Activated T-helper 1 cell treated with anti-CD3 and anti-CD28 coated beads, Interleukin-12 subunit alpha, Interleukin-12 subunit beta, Interleukin-2, Interleukin-4 antibody, amounts not matched to agents 30 ng/mL and 10 ng/mL and 1 ng/mL, durations not matched to agents 14 hours and 24 hours and 36 hours (primary cell): ENCODE measurements at regions of chr6 and their contacts with region 1.

Region 1: GRCh38 chr6:11064836-11065235 is 20.7 kb upstream of the ELOVL2 start:
- DNase-seq: no peak
- H3K4me3 Mint-ChIP-seq: no peak overlapping the region
- H3K27ac Mint-ChIP-seq: no peak overlapping the region
- H3K4me1 Mint-ChIP-seq: no peaks in the 10 kb centered on the region
- H3K27me3 Mint-ChIP-seq: peaks cover 12% of the 10 kb centered on the region

Region 2: GRCh38 chr6:10465629-10466504 is 599.0 kb before region 1 on chr6:
- intact Hi-C with region 1: no loop called
- DNase-seq: no peak
- H3K4me3 Mint-ChIP-seq: no peak overlapping the region
- H3K27ac Mint-ChIP-seq: no peak overlapping the region
- H3K4me1 Mint-ChIP-seq: no peaks in the 10 kb centered on the region
- H3K27me3 Mint-ChIP-seq: peaks cover 12% of the 10 kb centered on the region

Region 3: GRCh38 chr6:10478187-10479040 is 586.4 kb before region 1 on chr6:
- intact Hi-C with region 1: loop called (anchors 1 kb)
- DNase-seq: no peak
- H3K4me3 Mint-ChIP-seq: no peak overlapping the region
- H3K27ac Mint-ChIP-seq: no peak overlapping the region
- H3K4me1 Mint-ChIP-seq: no peaks in the 10 kb centered on the region
- H3K27me3 Mint-ChIP-seq: peaks cover 13% of the 10 kb centered on the region

Region 4: DNA sequence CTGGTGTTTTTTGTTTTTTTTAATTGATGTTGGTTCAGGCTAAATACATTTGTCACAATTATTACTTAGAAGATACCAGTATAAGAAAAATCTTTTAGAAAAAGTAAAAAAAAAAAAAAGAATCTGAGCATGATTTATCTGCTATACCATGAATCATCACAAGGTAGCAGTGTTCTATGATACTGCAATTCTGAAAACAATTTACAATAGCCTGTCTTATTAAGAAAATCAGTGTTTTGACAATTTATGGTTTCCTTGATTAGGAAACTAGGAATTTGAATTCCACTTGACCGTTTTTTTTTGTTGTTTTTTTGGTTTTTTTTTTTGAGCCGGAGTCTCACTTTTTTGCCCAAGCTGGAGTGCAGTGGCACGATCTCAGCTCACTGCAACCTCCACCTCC is 217.2 kb before region 1 on chr6:
- intact Hi-C with region 1: loop called (anchors 10 kb)
- DNase-seq: no peak
- H3K4me3 Mint-ChIP-seq: no peak overlapping the region
- H3K27ac Mint-ChIP-seq: no peak overlapping the region
- H3K4me1 Mint-ChIP-seq: no peaks in the 10 kb centered on the region
- H3K27me3 Mint-ChIP-seq: peaks cover 22% of the 10 kb centered on the region

Region 5: DNA sequence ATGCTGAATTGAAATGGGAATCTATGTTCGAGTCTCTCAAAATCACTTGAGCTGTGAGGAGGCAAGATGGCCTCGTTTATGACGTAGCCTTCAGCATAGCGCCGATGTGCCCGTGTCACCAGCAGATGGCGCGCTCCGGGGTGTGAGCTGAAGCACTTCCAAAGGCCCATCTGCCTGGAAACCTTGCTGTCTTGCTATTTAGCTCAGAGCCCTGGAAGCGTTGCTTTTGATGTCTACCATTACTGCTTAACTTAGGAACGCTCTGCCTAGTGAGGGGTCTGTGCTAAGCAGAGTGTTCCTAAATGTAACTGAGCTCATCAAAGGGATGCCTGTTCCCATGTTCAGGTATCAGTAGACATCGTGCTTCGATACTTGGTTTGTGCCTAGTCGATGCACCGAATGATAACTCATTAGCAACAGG is 110.2 kb before region 1 on chr6:
- intact Hi-C with region 1: loop called (anchors 1 kb)
- DNase-seq: peak; percentile 50
- H3K4me3 Mint-ChIP-seq: no peak overlapping the region
- H3K27ac Mint-ChIP-seq: no peak overlapping the region
- H3K4me1 Mint-ChIP-seq: no peaks in the 10 kb centered on the region
- H3K27me3 Mint-ChIP-seq: peaks cover 7% of the 10 kb centered on the region

Region 6: DNA sequence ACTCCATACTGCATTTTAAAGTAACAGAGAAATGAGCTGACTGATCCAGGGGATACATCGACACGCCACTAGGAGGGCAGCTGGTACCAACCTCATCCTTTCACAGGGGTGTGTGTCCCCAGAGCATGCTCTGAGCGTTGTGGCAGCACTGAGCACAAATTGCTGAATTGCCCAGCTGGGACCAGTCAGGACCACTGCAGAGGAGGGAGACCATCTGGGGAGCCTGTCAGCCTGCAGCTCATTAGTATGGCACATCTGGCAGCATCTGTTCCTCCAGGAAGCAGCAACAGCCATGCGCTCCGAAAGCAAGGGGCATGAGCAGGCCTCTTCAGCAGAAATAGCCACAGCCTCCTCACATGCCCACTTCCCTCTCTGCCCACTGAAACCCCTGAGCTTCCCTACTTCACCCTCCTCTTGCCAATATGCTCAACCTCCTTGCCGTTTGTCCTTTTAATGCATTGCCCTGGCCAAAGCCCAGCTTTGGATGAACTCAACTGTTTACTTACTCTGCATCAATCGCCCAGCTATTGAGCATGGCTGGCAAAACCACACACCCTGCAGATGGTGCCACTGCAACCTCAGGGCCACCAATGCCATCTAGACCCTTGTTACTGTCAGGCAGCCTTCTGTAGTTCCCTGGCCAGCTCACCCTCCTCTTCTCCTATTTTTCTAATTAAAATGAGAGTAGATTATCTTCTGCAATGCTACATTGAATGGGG is 245.3 kb after region 1 on chr6:
- intact Hi-C with region 1: no loop called
- DNase-seq: no peak
- H3K4me3 Mint-ChIP-seq: no peak overlapping the region
- H3K27ac Mint-ChIP-seq: no peak overlapping the region
- H3K4me1 Mint-ChIP-seq: peaks cover 35% of the 10 kb centered on the region
- H3K27me3 Mint-ChIP-seq: no peaks in the 10 kb centered on the region

Region 7: GRCh38 chr6:11575408-11576033 is 510.7 kb after region 1 on chr6:
- intact Hi-C with region 1: loop called (anchors 5 kb)
- DNase-seq: peak; percentile 37
- H3K4me3 Mint-ChIP-seq: no peak overlapping the region
- H3K27ac Mint-ChIP-seq: no peak overlapping the region
- H3K4me1 Mint-ChIP-seq: no peaks in the 10 kb centered on the region
- H3K27me3 Mint-ChIP-seq: peaks cover 2% of the 10 kb centered on the region